CD8-positive, alpha-beta memory T cell (primary cell): ENCODE measurements at regions of chr17 and their contacts with region 1.

Region 1: GRCh38 chr17:56592487-56593085 is 913 bp upstream of the NOG start:
- DNase-seq: peak; percentile 36 to 77 (median 46)
- H3K4me3 ChIP-seq: peak overlapping the region; percentile 72
- H3K4me3 Mint-ChIP-seq: peak overlapping the region; percentile 17 to 85 (median 58)
- H3K27ac ChIP-seq: no peak overlapping the region
- H3K27ac Mint-ChIP-seq: no peak overlapping the region
- H3K4me1 ChIP-seq: peaks cover 5% of the 10 kb centered on the region
- H3K4me1 Mint-ChIP-seq: peaks cover 15 to 36% (median 21%) of the 10 kb centered on the region in 3 donors
- H3K27me3 ChIP-seq: peaks cover 29% of the 10 kb centered on the region
- H3K27me3 Mint-ChIP-seq: peaks cover 43 to 61% of the 10 kb centered on the region in 2 donors

Region 2: GRCh38 chr17:56222255-56222654 is 370.3 kb before region 1 on chr17:
- CTCF ChIA-PET with region 1: no interaction called
- POLR2A ChIA-PET with region 1: no interaction called
- DNase-seq: no peak
- H3K4me3 ChIP-seq: no peak overlapping the region
- H3K4me3 Mint-ChIP-seq: no peak overlapping the region
- H3K27ac ChIP-seq: no peak overlapping the region
- H3K27ac Mint-ChIP-seq: no peak overlapping the region
- H3K4me1 ChIP-seq: no peaks in the 10 kb centered on the region
- H3K4me1 Mint-ChIP-seq: no peaks in the 10 kb centered on the region
- H3K27me3 ChIP-seq: no peaks in the 10 kb centered on the region
- H3K27me3 Mint-ChIP-seq: peaks cover 0 to 5% of the 10 kb centered on the region in 2 donors

Region 3: GRCh38 chr17:56416682-56417351 is 175.8 kb before region 1 on chr17:
- CTCF ChIA-PET with region 1: no interaction called
- POLR2A ChIA-PET with region 1: no interaction called
- DNase-seq: no peak
- H3K4me3 ChIP-seq: no peak overlapping the region
- H3K4me3 Mint-ChIP-seq: no peak overlapping the region
- H3K27ac ChIP-seq: no peak overlapping the region
- H3K27ac Mint-ChIP-seq: no peak overlapping the region
- H3K4me1 ChIP-seq: no peaks in the 10 kb centered on the region
- H3K4me1 Mint-ChIP-seq: no peaks in the 10 kb centered on the region
- H3K27me3 ChIP-seq: no peaks in the 10 kb centered on the region
- H3K27me3 Mint-ChIP-seq: peaks cover 8 to 24% of the 10 kb centered on the region in 2 donors

Region 4: GRCh38 chr17:56581635-56582627 is 10.7 kb before region 1 on chr17:
- CTCF ChIA-PET with region 1: interaction called, 10 read pairs
- POLR2A ChIA-PET with region 1: interaction called, 3 read pairs
- DNase-seq: no peak
- H3K4me3 ChIP-seq: no peak overlapping the region
- H3K4me3 Mint-ChIP-seq: no peak overlapping the region
- H3K27ac ChIP-seq: no peak overlapping the region
- H3K27ac Mint-ChIP-seq: no peak overlapping the region
- H3K4me1 ChIP-seq: no peaks in the 10 kb centered on the region
- H3K4me1 Mint-ChIP-seq: no peaks in the 10 kb centered on the region
- H3K27me3 ChIP-seq: no peaks in the 10 kb centered on the region
- H3K27me3 Mint-ChIP-seq: peaks cover 20 to 35% of the 10 kb centered on the region in 2 donors

Region 5: GRCh38 chr17:56715613-56716357 is 123.2 kb after region 1 on chr17:
- CTCF ChIA-PET with region 1: interaction called, 31 read pairs
- POLR2A ChIA-PET with region 1: no interaction called
- DNase-seq: peak; percentile 41 to 74 (median 53)
- H3K4me3 ChIP-seq: no peak overlapping the region
- H3K4me3 Mint-ChIP-seq: no peak overlapping the region
- H3K27ac ChIP-seq: no peak overlapping the region
- H3K27ac Mint-ChIP-seq: no peak overlapping the region
- H3K4me1 ChIP-seq: no peaks in the 10 kb centered on the region
- H3K4me1 Mint-ChIP-seq: no peaks in the 10 kb centered on the region
- H3K27me3 ChIP-seq: no peaks in the 10 kb centered on the region
- H3K27me3 Mint-ChIP-seq: peaks cover 5 to 9% of the 10 kb centered on the region in 2 donors

Region 6: GRCh38 chr17:56779898-56780733 is 187.5 kb after region 1 on chr17:
- CTCF ChIA-PET with region 1: interaction called, 40 read pairs
- POLR2A ChIA-PET with region 1: no interaction called
- DNase-seq: peak; percentile 72 to 86 (median 78)
- H3K4me3 ChIP-seq: peak overlapping the region; percentile 78
- H3K4me3 Mint-ChIP-seq: peak overlapping the region; percentile 81 to 96 (median 92)
- H3K27ac ChIP-seq: no peak overlapping the region
- H3K27ac Mint-ChIP-seq: peak overlapping the region; percentile 74 to 98 (median 92)
- H3K4me1 ChIP-seq: peaks cover 15% of the 10 kb centered on the region
- H3K4me1 Mint-ChIP-seq: peaks cover 14 to 20% (median 16%) of the 10 kb centered on the region in 3 donors
- H3K27me3 ChIP-seq: peaks cover 6% of the 10 kb centered on the region
- H3K27me3 Mint-ChIP-seq: peaks cover 3 to 5% of the 10 kb centered on the region in 2 donors